Dorsolateral prefrontal cortex (tissue), 120 donors: ENCODE measurements at regions of chr5 and their contacts with region 1.

Region 1: DNA sequence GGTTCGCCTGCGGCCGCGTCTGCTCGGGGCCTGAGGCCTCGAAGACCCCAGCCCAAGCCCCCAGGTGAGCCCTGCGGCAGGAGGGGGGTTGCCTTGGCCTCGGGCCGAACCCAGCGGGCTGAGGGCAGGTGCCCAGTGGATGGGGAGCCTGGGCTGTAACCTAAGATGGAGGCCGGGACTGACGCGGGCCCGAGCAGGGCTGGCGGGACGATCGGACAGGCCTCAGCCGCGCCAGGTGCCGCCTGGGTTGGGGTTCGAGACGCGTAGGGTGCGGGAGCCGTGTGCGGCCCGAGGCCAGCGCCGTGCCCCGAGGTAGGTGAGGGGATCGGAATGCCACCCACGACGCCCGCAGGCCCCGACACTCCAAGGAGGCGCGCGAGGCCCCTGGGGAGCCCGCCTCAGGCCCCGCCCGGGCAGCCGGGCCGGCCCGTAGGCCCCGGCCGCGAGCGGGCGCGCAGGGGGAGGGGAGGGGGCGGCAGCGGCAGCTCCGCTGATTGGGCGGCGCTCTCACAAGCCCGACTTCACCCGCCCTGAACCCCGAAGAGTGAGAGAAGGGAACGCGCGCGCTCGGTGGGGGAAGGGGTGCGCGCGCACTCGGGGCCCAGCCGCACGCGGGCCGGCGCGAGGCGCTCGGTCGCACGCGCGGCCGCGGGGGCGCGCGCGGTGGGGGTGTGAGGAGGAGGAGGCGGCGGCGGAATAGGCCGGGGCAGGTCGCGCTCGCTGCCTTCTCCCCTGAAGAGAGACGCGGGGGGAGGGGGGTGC is at the start of gene NSD1:
- DNase-seq: peak; percentile 81 to 94 (median 90)
- H3K4me3 ChIP-seq: peak within 1 kb of the TSS; percentile 54 to 93 (median 83)
- H3K27ac ChIP-seq: peak within 1 kb of the TSS; percentile 89 to 100 (median 98)
- H3K27me3 ChIP-seq: no peaks in the 10 kb centered on the region
- CTCF ChIP-seq: no peak
- total RNA-seq, gene NSD1: 73.3 to 132 (median 99.2) TPM

Region 2: GRCh38 chr5:176762489-176762888 is 370.8 kb before region 1 on chr5:
- intact Hi-C with region 1: no loop called
- DNase-seq: peak in 1 of 10 donors; percentile 4
- H3K4me3 ChIP-seq: no peak overlapping the region
- H3K27ac ChIP-seq: no peak overlapping the region
- H3K27me3 ChIP-seq: peaks cover 0 to 5% (median 0%) of the 10 kb centered on the region in 45 donors
- CTCF ChIP-seq: no peak

Region 3: GRCh38 chr5:177006265-177006972 is 126.9 kb before region 1 on chr5 and contains the start of gene UIMC1:
- intact Hi-C with region 1: loop called in 1 of 2 experiments (anchors 5 kb)
- DNase-seq: peak; percentile 81 to 92 (median 87)
- H3K4me3 ChIP-seq: peak within 1 kb of the TSS; percentile 43 to 98 (median 90)
- H3K27ac ChIP-seq: peak within 1 kb of the TSS; percentile 53 to 96 (median 88)
- H3K27me3 ChIP-seq: no peaks in the 10 kb centered on the region
- CTCF ChIP-seq: peak in 22 of 56 donors; percentile 8 to 44 (median 23)
- total RNA-seq, gene UIMC1: 37.0 to 83.1 (median 53.2) TPM

Region 4: GRCh38 chr5:177194274-177194673 is 61.0 kb after region 1 on chr5:
- intact Hi-C with region 1: no loop called
- DNase-seq: no peak
- H3K4me3 ChIP-seq: no peak overlapping the region
- H3K27ac ChIP-seq: no peak overlapping the region
- H3K27me3 ChIP-seq: no peaks in the 10 kb centered on the region
- CTCF ChIP-seq: no peak

Region 5: GRCh38 chr5:177232761-177233160 is 99.5 kb after region 1 on chr5:
- intact Hi-C with region 1: loop called in 1 of 2 experiments (anchors 10 kb)
- DNase-seq: no peak
- H3K4me3 ChIP-seq: no peak overlapping the region
- H3K27ac ChIP-seq: peak overlapping the region in 28 of 59 donors; percentile 4 to 77 (median 25)
- H3K27me3 ChIP-seq: no peaks in the 10 kb centered on the region
- CTCF ChIP-seq: no peak

Region 6: GRCh38 chr5:177303121-177303924 is 170.1 kb after region 1 on chr5 and contains the starts of genes PRELID1 and RAB24:
- intact Hi-C with region 1: loop called (anchors 5 kb)
- DNase-seq: peak; percentile 83 to 96 (median 90)
- H3K4me3 ChIP-seq: peak within 1 kb of the TSS; percentile 77 to 100 (median 98)
- H3K27ac ChIP-seq: peak within 1 kb of the TSS in 57 of 59 donors; percentile 28 to 93 (median 79)
- H3K27me3 ChIP-seq: no peaks in the 10 kb centered on the region
- CTCF ChIP-seq: peak in 54 of 56 donors; percentile 15 to 70 (median 50)
- total RNA-seq, gene PRELID1: 46.3 to 88.8 (median 64.7) TPM
- total RNA-seq, gene RAB24: 24.3 to 74.5 (median 50.3) TPM

Region 7: DNA sequence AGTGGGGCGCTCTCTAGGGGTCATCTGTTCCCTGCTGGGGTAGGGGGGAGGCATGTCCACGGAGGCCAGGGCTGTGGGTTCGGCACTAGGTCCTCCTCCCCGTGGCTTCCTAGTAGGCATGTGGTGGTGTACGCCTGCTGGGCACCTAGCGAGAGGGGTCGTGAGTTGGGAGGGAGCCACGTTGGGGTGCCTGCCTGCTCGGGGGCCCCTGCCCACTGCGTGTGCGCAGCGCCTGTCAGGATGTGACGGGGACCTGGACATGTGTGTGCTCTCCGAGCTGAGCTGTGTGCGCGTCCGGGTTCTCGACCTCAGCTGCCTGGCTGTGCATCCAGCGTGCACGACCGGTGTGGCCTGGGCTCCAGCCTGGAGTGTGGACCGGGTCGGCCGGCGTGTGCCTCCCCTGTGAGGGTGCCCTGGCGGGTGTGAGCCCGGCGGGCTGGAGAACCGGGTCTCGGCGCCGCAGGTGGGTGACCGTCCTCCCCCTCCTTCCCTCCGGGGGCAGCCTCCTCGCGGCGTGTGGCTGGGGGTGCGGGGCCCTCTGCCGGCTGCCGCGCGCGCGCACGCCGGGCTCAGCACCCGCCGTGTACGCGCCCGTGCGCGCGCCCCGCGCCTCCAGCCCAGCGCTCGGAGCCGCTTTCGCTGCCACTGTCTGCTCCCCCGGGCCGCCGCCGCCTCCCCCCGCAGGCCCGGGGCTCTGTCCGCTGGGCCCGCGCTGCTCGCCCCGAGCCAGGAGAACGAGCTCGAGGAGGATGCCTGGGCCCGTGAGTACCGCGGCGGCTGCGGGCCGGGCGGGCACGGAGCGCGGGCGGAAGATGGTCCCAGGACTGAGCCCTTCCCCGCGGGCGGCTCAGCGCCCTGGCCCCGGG is 313.2 kb after region 1 on chr5 and contains the start of gene PRR7:
- intact Hi-C with region 1: loop called in 1 of 2 experiments (anchors 10 kb)
- DNase-seq: peak; percentile 58 to 85 (median 74)
- H3K4me3 ChIP-seq: peak within 1 kb of the TSS; percentile 54 to 88 (median 75)
- H3K27ac ChIP-seq: peak within 1 kb of the TSS; percentile 29 to 97 (median 92)
- H3K27me3 ChIP-seq: no peaks in the 10 kb centered on the region
- CTCF ChIP-seq: peak in 32 of 56 donors; percentile 5 to 55 (median 26)
- total RNA-seq, gene PRR7: 8.4 to 26.6 (median 16.7) TPM